Naive thymus-derived CD4-positive, alpha-beta T cell (primary cell): ENCODE measurements at regions of chr14 and their contacts with region 1.

Region 1: GRCh38 chr14:101761032-101761880 is at the start of gene PPP2R5C:
- DNase-seq: peak; percentile 73 to 90 (median 87)
- ATAC-seq: peak; percentile 73
- H3K4me3 ChIP-seq: peak within 1 kb of the TSS; percentile 94
- H3K4me3 Mint-ChIP-seq: peak within 1 kb of the TSS; percentile 89 to 96 (median 93)
- H3K27ac ChIP-seq: peak within 1 kb of the TSS; percentile 91
- H3K27ac Mint-ChIP-seq: peak within 1 kb of the TSS; percentile 69 to 95 (median 91)
- H3K4me1 ChIP-seq: peaks cover 11 to 14% of the 10 kb centered on the region in 2 donors
- H3K4me1 Mint-ChIP-seq: peaks cover 30 to 56% (median 38%) of the 10 kb centered on the region in 7 donors
- H3K27me3 ChIP-seq: no peaks in the 10 kb centered on the region
- H3K27me3 Mint-ChIP-seq: peaks cover 0 to 11% (median 0%) of the 10 kb centered on the region in 5 donors
- total RNA-seq, gene PPP2R5C: 266 to 449 (median 405) TPM

Region 2: DNA sequence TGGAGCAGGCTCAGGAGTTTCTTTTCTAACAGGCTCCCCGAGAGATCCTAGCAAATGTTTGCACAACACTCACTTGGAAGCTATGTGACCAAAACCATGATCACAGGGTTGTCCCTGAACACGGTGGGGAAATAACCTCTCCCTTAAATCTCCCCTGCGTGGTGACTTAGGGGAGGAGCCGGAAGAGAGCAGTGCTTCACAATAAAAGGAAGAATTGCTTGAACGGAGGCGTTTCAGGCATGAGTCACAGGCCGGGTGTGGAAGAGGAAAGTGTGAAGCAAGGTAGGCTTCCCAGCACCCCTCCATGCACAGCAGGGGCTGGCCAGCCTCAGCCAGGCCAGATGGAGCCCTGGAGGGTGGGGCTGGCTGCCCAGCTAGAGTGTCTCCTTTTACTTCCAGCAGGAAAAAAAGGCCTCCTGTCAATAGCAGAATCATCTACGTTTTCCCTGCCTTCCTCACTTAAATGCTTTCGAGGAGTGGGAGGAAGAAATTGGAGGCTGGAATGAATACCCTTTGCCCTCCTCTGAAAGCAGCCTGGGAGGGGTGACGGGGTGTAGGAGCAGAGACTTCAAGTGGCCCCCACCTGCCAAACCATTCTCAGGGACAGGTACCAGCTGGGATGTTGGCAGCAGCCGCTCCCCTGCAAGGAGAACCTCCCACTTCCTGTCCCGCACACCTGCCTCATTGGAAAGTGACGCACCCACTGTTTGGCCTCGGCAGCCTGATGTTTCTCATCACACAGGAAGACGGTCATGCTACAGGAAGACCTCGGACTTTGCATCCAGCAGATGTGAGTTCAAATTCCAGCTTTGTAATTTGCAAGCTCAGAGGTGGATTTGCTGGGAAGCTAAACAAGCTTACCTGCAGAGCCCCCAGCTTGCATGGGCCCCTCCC is 29.8 kb before region 1 on chr14:
- CTCF ChIA-PET with region 1: interaction called, 4 read pairs
- POLR2A ChIA-PET with region 1: interaction called, 14 read pairs
- intact Hi-C with region 1: loop called (anchors 1 kb)
- DNase-seq: peak; percentile 37 to 90 (median 78)
- ATAC-seq: peak; percentile 96
- H3K4me3 ChIP-seq: peak overlapping the region; percentile 53
- H3K4me3 Mint-ChIP-seq: peak overlapping the region; percentile 79 to 95 (median 84)
- H3K27ac ChIP-seq: peak overlapping the region; percentile 82
- H3K27ac Mint-ChIP-seq: peak overlapping the region; percentile 93 to 99 (median 98)
- H3K4me1 ChIP-seq: peaks cover 26 to 36% of the 10 kb centered on the region in 2 donors
- H3K4me1 Mint-ChIP-seq: peaks cover 12 to 62% (median 47%) of the 10 kb centered on the region in 7 donors
- H3K27me3 ChIP-seq: no peaks in the 10 kb centered on the region
- H3K27me3 Mint-ChIP-seq: no peaks in the 10 kb centered on the region

Region 3: DNA sequence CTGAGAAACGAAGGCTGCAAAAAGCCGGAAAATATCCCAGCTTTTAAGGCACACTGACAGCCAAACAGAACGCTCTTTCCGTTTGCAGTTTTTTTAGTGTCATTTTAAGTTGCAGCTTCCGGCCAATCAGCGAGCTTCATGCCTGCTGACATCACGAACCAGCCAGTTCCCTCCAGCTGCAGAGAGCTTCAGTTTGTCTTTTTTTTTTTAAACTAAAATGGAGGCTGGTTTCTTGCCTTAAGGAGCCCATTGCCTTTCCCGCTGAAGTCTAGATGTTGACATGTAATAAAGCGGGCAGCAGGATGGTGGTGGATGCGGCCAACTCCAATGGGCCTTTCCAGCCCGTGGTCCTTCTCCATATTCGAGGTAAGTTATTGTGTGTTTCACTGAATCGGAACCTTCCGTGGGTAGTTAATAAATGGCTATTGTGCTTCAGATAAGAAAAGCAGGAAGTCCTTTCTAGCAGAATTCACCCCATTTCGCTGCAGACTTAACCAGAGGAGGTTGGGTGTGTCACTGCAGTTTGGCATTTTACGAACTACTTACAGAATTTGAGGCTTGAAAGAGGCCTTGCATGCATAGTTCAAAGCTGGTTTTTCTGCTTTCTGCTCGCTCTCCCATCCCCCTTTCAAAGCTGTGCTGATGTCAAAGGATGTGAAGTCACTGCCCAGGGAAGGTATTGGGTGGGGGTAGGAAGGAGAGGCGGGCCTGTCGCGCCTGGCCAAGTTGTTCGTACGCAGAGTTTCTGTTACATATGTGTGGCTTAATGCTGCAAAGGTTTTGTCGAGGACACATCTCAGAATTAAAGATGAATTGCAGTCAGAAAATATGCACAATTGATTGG is 48.6 kb after region 1 on chr14:
- CTCF ChIA-PET with region 1: no interaction called
- POLR2A ChIA-PET with region 1: interaction called, 25 read pairs
- intact Hi-C with region 1: loop called (anchors 1 kb)
- DNase-seq: peak; percentile 57 to 97 (median 95)
- ATAC-seq: peak; percentile 94
- H3K4me3 ChIP-seq: peak overlapping the region; percentile 92
- H3K4me3 Mint-ChIP-seq: peak overlapping the region; percentile 94 to 98 (median 96)
- H3K27ac ChIP-seq: peak overlapping the region; percentile 99
- H3K27ac Mint-ChIP-seq: peak overlapping the region; percentile 90 to 100 (median 99)
- H3K4me1 ChIP-seq: peaks cover 36 to 38% of the 10 kb centered on the region in 2 donors
- H3K4me1 Mint-ChIP-seq: peaks cover 27 to 62% (median 55%) of the 10 kb centered on the region in 7 donors
- H3K27me3 ChIP-seq: no peaks in the 10 kb centered on the region
- H3K27me3 Mint-ChIP-seq: no peaks in the 10 kb centered on the region

Region 4: GRCh38 chr14:101947906-101948665 is 186.8 kb after region 1 on chr14:
- CTCF ChIA-PET with region 1: no interaction called
- POLR2A ChIA-PET with region 1: interaction called, 4 read pairs
- intact Hi-C with region 1: loop called (anchors 1 kb)
- DNase-seq: peak; percentile 95 to 100 (median 99)
- ATAC-seq: peak; percentile 97
- H3K4me3 ChIP-seq: peak overlapping the region; percentile 96
- H3K4me3 Mint-ChIP-seq: peak overlapping the region; percentile 86 to 99 (median 98)
- H3K27ac ChIP-seq: peak overlapping the region; percentile 99
- H3K27ac Mint-ChIP-seq: peak overlapping the region; percentile 97 to 100 (median 99)
- H3K4me1 ChIP-seq: peaks cover 9 to 10% of the 10 kb centered on the region in 2 donors
- H3K4me1 Mint-ChIP-seq: peaks cover 17 to 34% (median 25%) of the 10 kb centered on the region in 7 donors
- H3K27me3 ChIP-seq: no peaks in the 10 kb centered on the region
- H3K27me3 Mint-ChIP-seq: peaks cover 15 to 37% (median 30%) of the 10 kb centered on the region in 5 donors

Region 5: DNA sequence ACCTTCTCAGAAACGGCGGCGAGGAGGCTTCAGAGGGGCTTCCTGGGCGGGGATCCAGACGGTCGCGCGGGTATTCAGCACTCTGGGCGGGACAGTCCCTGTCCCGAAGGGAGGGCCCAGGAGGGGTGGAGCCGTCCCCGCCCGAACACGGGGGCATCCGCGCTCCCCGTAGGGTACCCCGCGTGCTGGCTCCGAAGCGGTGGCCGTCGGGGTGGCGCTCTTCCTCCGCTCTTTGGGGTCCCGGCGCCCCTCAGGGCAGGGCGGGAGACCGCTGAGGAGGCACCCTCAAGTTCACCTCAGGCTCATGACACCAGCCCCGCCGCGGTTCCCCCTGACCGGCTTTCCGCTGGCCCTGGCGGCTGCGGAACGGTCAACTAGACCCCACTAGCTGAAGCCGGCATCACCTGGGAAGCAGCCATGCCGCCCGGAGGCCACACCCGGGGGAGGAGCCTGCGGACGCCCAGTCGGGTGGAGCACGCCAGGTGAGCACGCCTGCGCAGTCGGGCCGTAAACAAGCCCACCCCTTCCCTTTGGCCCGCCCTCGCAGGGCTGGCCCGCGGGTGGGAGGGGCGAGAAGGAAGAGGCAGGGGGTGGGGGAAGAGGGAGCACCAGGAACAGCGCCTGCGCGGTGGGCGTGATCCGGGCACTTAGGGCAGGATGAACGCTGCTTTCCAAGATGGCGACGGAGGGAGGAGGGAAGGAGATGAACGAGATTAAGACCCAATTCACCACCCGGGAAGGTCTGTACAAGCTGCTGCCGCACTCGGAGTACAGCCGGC is 378.2 kb after region 1 on chr14 and contains the start of gene WDR20:
- CTCF ChIA-PET with region 1: no interaction called
- POLR2A ChIA-PET with region 1: no interaction called
- intact Hi-C with region 1: loop called (anchors 1 kb)
- DNase-seq: peak; percentile 98 to 100 (median 99)
- ATAC-seq: peak; percentile 98
- H3K4me3 ChIP-seq: peak within 1 kb of the TSS; percentile 80
- H3K4me3 Mint-ChIP-seq: peak within 1 kb of the TSS; percentile 96 to 99 (median 98)
- H3K27ac ChIP-seq: peak within 1 kb of the TSS; percentile 90
- H3K27ac Mint-ChIP-seq: peak within 1 kb of the TSS; percentile 95 to 99 (median 96)
- H3K4me1 ChIP-seq: peaks cover 18 to 22% of the 10 kb centered on the region in 2 donors
- H3K4me1 Mint-ChIP-seq: peaks cover 17 to 36% (median 26%) of the 10 kb centered on the region in 7 donors
- H3K27me3 ChIP-seq: no peaks in the 10 kb centered on the region
- H3K27me3 Mint-ChIP-seq: no peaks in the 10 kb centered on the region
- total RNA-seq, gene WDR20: 33.1 to 67.8 (median 47.5) TPM